Naive thymus-derived CD4-positive, alpha-beta T cell (primary cell): ENCODE measurements at regions of chr20 and their contacts with region 1.

Region 1: DNA sequence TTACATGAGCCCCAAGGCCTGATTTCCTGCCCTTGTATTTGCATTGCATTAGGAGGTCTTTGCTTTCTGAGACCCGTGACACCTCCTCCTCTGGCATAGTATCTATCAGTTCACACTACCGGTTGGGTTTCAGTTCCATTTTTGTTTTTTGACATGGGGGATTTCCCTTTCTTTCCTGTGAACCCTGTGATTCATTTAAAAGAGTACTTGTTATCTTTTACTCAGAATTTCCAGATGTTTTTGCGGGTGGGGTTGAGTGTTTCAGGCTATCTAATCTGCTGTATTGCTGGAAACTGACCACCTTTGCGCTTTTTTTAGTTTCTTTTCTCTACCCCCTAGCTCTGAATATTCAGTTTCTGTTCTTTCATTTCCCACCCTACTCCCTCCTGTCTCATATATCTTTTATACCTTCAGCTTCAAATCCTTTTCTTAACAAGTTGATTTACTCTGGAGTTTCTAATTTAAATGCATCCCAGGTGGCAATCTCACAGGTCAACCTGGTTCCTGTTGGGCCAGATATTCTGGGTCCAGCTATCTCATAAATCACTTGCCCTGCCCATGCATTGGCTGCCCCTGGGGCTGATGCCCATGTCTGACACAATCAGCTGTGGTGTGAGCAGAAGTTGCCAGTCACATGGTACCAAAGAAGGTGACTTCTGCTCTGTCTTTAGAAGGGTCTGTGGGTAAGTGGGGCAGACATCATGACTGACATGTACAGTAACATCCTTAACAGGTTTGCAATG is 14.3 kb upstream of the NCOA3 start:
- DNase-seq: peak in 8 of 9 donors; percentile 38 to 84 (median 62)
- ATAC-seq: peak; percentile 89
- H3K4me3 ChIP-seq: peak overlapping the region; percentile 14
- H3K4me3 Mint-ChIP-seq: peak overlapping the region in 9 of 10 donors; percentile 14 to 74 (median 56)
- H3K27ac ChIP-seq: peak overlapping the region; percentile 56
- H3K27ac Mint-ChIP-seq: peak overlapping the region; percentile 56 to 97 (median 84)
- H3K4me1 ChIP-seq: peaks cover 10 to 14% of the 10 kb centered on the region in 2 donors
- H3K4me1 Mint-ChIP-seq: peaks cover 17 to 66% (median 32%) of the 10 kb centered on the region in 7 donors
- H3K27me3 ChIP-seq: no peaks in the 10 kb centered on the region
- H3K27me3 Mint-ChIP-seq: no peaks in the 10 kb centered on the region

Region 2: DNA sequence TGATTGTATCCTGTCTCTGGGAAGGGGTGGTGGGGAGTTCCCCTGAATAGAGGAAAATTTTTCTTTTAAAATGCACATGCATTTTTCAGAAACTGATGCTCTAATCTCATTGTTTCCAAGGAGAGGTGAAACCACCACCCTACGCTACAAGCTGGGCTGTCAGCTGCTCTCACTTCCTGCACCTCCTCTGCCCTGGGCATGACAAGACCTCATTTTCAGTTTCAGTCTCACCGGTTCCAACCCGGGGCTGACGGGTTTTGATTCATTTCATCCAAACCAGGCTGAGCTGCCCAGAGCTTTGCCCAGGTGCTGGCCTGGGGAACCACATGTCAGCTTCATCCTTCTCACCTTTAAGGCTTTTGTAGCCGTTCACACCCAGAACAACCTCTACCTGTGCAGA is 493.0 kb before region 1 on chr20:
- CTCF ChIA-PET with region 1: no interaction called
- POLR2A ChIA-PET with region 1: no interaction called
- intact Hi-C with region 1: loop called in 1 of 2 experiments (anchors 5 kb)
- DNase-seq: peak in 2 of 9 donors; percentile 9 to 73
- ATAC-seq: peak; percentile 54
- H3K4me3 ChIP-seq: peak overlapping the region; percentile 39
- H3K4me3 Mint-ChIP-seq: peak overlapping the region in 9 of 10 donors; percentile 48 to 83 (median 52)
- H3K27ac ChIP-seq: no peak overlapping the region
- H3K27ac Mint-ChIP-seq: peak overlapping the region in 1 of 9 donors; percentile 93
- H3K4me1 ChIP-seq: no peaks in the 10 kb centered on the region
- H3K4me1 Mint-ChIP-seq: peaks cover 0 to 74% (median 8%) of the 10 kb centered on the region in 7 donors
- H3K27me3 ChIP-seq: no peaks in the 10 kb centered on the region
- H3K27me3 Mint-ChIP-seq: peaks cover 9 to 40% (median 31%) of the 10 kb centered on the region in 5 donors

Region 3: DNA sequence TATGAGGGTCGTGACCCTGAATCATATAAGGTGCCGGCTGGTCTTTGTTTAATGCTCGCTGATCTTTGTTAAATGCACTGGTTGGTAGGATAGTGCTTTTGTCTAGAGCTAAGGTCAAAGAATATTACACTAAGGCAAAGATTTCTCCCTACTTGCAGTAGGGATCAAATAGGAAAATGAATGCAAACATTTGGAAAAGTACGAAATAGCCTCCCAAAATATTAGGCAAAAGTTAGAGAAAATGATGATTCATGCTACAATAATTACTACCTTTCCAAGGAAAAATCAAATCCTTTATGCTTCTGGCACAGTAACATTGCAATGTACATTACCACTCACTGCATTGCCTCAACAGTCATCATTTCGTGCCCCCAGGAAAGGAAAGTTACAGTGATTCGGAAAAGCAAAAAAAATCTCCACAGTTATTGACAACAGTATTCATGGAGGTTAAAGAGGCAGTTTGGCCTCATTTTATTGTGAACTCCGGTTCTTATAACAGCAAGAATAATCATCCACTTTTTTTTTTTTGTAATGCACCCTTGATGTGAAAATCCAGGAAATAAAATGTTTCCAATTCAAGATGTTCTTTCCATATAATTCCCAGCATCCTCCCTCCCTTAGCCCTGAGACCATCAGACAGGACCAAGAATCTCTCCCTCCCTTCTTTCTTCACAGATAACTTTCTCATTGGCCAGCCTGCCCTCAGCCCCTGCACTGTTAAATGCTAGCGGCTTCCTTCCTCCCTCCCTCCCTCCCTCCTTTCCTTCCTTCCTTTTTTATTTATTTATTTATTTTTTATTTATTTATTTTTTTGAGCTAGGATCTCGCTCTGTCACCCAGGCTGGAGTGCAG is 69.1 kb before region 1 on chr20:
- CTCF ChIA-PET with region 1: interaction called, 3 read pairs
- POLR2A ChIA-PET with region 1: no interaction called
- intact Hi-C with region 1: loop called in 1 of 2 experiments (anchors 5 kb)
- DNase-seq: no peak
- ATAC-seq: no peak
- H3K4me3 ChIP-seq: no peak overlapping the region
- H3K4me3 Mint-ChIP-seq: no peak overlapping the region
- H3K27ac ChIP-seq: no peak overlapping the region
- H3K27ac Mint-ChIP-seq: peak overlapping the region in 2 of 9 donors; percentile 1 to 71
- H3K4me1 ChIP-seq: peaks cover 13 to 19% of the 10 kb centered on the region in 2 donors
- H3K4me1 Mint-ChIP-seq: peaks cover 14 to 39% (median 29%) of the 10 kb centered on the region in 7 donors
- H3K27me3 ChIP-seq: no peaks in the 10 kb centered on the region
- H3K27me3 Mint-ChIP-seq: no peaks in the 10 kb centered on the region

Region 4: DNA sequence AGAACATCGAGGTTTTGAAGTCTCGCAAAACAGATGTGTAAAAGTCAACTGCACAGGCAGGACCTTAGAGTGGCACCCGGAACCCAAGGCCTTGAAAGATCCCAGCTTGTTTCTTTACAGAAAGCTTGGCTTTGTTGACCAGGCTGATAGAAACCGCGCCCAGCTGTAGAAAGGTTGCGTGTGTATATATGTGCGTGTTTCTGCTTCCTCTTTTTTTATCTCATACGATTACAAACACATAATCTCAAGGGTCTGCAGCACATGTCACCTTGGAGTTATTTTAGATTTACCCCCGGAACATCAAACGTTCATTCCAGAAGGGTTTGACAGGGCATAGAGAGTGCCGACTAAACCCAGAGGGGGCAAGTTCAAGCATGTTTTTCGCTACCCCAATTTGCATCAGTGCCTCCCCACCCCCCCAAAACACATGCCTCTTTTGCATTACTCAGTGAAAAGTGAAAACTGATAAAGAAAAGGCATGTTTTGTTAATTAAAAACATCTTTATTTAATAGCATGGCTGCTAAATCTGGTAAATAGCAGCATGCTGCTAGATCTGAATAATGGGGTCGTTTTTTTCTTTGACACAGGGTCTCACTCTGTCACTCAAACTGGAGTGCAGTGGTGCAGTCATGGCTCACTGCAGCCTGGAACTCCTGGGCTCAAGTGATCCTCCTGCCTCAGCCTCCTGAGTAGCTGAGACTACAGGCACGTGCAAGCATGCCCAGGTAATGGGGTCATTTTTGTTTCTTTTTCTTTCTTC is 18.9 kb before region 1 on chr20:
- CTCF ChIA-PET with region 1: no interaction called
- POLR2A ChIA-PET with region 1: no interaction called
- intact Hi-C with region 1: loop called in 1 of 2 experiments (anchors 1 kb)
- DNase-seq: no peak
- ATAC-seq: peak; percentile 32
- H3K4me3 ChIP-seq: no peak overlapping the region
- H3K4me3 Mint-ChIP-seq: no peak overlapping the region
- H3K27ac ChIP-seq: no peak overlapping the region
- H3K27ac Mint-ChIP-seq: no peak overlapping the region
- H3K4me1 ChIP-seq: no peaks in the 10 kb centered on the region
- H3K4me1 Mint-ChIP-seq: peaks cover 0 to 28% (median 3%) of the 10 kb centered on the region in 7 donors
- H3K27me3 ChIP-seq: no peaks in the 10 kb centered on the region
- H3K27me3 Mint-ChIP-seq: no peaks in the 10 kb centered on the region

Region 5: DNA sequence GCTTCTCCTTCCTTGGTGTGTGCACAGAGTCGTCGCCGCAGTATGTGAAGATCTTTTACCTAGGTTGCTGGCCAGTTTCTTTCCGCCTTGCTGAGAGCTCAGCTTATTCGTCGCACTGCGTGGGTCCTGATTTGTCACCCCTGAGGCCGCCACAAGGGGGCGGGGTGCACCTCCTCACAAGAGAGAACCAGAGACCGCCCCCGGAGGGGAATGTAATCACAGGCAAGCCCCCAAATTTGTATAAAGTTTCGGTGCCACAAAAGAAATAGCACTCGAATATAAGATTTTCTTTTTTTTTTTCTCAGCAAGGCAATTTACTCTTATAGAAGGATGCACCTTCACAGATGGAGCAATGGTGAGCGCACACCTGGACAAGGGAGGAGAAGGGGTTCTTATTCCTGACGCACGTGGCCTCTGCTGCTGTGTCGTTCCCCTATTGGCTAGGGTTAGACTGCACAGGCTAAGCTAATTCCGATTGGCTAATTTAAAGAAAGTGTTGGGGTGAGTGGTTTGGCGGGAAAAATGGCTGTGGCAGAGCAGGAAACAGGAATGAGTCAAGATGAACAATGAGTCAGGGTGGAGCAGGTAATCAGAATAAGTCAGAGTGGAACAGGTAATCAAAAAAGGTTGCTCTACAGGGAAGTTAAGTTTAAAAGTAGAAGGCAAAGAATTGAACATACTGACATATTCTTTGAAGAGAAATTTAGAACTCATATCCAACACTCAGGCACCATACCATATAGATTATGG is 33.9 kb after region 1 on chr20:
- CTCF ChIA-PET with region 1: no interaction called
- POLR2A ChIA-PET with region 1: no interaction called
- intact Hi-C with region 1: no loop called
- DNase-seq: no peak
- ATAC-seq: no peak
- H3K4me3 ChIP-seq: no peak overlapping the region
- H3K4me3 Mint-ChIP-seq: peak overlapping the region in 3 of 10 donors; percentile 13 to 18 (median 13)
- H3K27ac ChIP-seq: no peak overlapping the region
- H3K27ac Mint-ChIP-seq: peak overlapping the region in 3 of 9 donors; percentile 35 to 67 (median 38)
- H3K4me1 ChIP-seq: peaks cover 0 to 5% of the 10 kb centered on the region in 2 donors
- H3K4me1 Mint-ChIP-seq: peaks cover 21 to 48% (median 28%) of the 10 kb centered on the region in 7 donors
- H3K27me3 ChIP-seq: no peaks in the 10 kb centered on the region
- H3K27me3 Mint-ChIP-seq: no peaks in the 10 kb centered on the region

Region 6: DNA sequence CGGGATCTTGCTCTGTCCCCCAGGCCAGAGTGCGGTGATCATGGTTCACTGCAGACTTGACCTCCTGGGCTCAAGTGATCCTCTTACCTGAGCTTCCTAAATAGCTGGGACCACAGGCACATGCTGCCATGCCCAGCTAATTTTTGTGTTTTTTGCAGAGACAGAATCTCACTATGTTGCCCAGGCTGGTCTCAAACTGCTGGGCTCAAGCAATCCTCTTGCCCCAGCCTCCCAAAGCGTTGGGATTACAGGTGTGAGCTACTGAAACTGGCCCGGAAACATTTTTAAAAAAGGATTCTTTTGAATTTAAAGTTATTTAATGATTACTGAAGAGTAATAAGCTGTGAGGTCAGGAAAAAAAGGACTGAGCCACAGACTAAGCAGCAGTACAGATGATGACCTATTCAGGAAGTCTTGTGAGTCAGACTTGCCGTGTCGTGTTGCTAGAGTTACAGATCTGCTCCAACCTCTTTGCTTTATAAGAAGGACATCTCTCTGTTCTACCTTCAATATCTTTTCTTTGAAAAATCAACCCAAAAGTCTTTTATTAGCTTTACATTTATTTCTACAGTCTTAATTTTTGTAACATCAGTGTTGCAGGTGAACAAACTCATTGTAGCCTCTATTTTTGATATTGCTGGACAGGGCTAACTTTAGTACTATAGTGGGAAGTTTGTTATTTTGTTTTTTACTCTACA is 123.0 kb after region 1 on chr20:
- CTCF ChIA-PET with region 1: interaction called, 3 read pairs
- POLR2A ChIA-PET with region 1: no interaction called
- intact Hi-C with region 1: loop called in 1 of 2 experiments (anchors 1 kb)
- DNase-seq: peak in 4 of 9 donors; percentile 5 to 68 (median 32)
- ATAC-seq: peak; percentile 89
- H3K4me3 ChIP-seq: no peak overlapping the region
- H3K4me3 Mint-ChIP-seq: peak overlapping the region in 8 of 10 donors; percentile 1 to 83 (median 39)
- H3K27ac ChIP-seq: peak overlapping the region; percentile 17
- H3K27ac Mint-ChIP-seq: peak overlapping the region; percentile 65 to 96 (median 86)
- H3K4me1 ChIP-seq: peaks cover 26 to 38% of the 10 kb centered on the region in 2 donors
- H3K4me1 Mint-ChIP-seq: peaks cover 40 to 83% (median 77%) of the 10 kb centered on the region in 7 donors
- H3K27me3 ChIP-seq: no peaks in the 10 kb centered on the region
- H3K27me3 Mint-ChIP-seq: no peaks in the 10 kb centered on the region